ENCODE measurements at regions of chr6 and their contacts with region 1.

Region 1: GRCh38 chr6:144284783-144285547 is at the start of gene UTRN:
- DNase-seq: peak; percentile 64
- H3K4me3 Mint-ChIP-seq: peak within 1 kb of the TSS; percentile 86
- H3K27ac Mint-ChIP-seq: no peak within 1 kb of the TSS
- H3K4me1 Mint-ChIP-seq: peaks cover 12% of the 10 kb centered on the region
- H3K27me3 Mint-ChIP-seq: peaks cover 21% of the 10 kb centered on the region
- total RNA-seq, gene UTRN: 35.3 to 39.9 TPM

Region 2: DNA sequence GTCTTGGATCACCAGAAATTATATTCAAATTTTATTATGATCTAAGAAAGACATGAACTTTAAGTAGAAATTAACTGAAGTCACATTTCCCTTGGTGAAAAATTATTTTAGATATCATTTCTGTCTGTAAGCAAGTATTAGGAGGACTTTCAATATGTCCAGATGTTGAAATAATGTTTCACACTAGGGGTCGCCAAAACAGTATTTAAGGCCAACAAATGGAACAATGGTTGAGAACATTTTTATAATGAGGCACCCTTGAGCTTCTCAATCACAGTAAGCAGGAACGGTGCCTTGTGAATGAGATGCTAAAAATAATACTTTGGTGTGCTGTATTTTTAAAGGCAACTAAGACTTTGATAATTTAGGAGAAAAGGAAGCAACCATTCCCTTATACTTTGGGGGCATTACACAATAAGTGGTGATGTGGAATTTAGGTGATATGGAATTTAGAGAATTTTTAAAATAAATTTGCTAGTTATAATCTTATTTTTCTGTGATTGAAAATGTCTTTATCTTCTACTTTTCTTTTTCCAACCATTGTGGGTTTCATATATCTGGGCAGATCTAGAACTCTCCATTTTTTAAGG is 180.0 kb before region 1 on chr6:
- CTCF ChIA-PET with region 1: interaction called, 3 read pairs
- intact Hi-C with region 1: loop called (anchors 2 kb)
- DNase-seq: peak; percentile 48
- H3K4me3 Mint-ChIP-seq: no peak overlapping the region
- H3K27ac Mint-ChIP-seq: no peak overlapping the region
- H3K4me1 Mint-ChIP-seq: peaks cover 11% of the 10 kb centered on the region
- H3K27me3 Mint-ChIP-seq: no peaks in the 10 kb centered on the region

Region 3: DNA sequence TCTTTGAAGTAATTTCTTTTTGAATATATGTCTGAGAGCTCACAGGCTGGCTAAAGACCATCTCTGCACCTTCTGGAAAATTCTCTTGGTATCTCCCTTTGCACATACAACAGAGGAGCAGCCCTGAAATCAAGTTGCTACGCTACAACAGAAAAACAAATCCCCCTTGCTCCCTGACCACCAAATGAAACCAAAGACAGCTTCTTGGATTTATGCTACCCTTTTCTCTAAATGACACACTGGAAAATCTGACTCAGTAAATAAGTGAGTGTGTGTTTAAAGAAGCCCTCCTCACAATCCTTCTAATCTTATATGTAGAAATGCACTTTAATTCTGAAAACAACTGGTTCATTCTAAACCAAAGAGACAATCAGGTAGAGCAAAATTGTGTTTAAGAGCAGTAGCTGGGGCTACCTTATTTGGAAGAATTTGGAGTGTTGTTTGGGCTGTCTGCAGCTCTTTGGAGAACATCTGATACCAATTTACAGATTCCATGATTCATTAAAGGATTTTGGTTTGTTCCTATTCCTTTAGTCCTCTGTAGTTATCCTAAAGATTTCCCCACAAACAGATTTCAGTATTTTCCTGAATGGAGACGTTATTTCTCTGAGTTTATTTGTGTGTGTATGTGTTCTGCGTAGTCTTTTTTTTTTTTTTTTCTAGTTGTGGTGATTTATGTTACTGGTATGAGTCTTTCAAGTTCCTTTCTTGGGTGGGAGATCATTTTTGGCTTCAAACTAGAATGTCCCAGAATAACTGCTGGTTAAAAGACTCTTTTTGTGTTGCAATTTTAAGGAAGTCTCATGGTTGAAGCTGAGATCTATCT is 36.3 kb before region 1 on chr6:
- CTCF ChIA-PET with region 1: no interaction called
- intact Hi-C with region 1: loop called (anchors 1 kb)
- DNase-seq: peak; percentile 9
- H3K4me3 Mint-ChIP-seq: no peak overlapping the region
- H3K27ac Mint-ChIP-seq: peak overlapping the region; percentile 32
- H3K4me1 Mint-ChIP-seq: peaks cover 16% of the 10 kb centered on the region
- H3K27me3 Mint-ChIP-seq: peaks cover 4% of the 10 kb centered on the region

Region 4: DNA sequence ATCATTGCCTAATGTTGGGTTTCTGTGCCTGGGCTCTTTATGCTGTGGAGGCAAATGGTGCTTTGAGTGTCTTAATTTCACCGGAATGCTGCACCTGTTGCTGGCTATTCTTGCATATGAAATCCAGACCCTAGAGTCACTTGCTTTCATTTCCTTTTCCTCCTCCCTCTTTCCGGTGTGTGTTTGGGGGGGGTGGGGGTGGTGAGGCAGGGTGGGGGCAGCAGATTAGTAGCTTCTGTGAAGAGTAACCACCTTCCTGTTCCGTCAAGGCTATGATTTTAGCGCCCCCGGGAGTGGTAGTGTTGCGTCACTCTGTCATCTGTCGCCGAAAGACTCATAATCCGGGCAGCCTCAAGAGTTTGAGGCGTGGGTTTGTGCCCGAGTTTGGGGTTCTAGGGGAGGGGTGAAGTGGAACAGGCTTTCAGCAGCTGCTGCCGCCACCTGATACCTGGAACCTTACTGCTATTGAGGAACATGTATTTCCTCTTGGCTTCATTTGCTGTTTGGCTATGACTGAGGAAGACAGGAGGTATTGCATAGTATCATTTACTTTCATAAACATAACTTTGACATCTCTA is 49.3 kb after region 1 on chr6:
- CTCF ChIA-PET with region 1: no interaction called
- intact Hi-C with region 1: loop called (anchors 1 kb)
- DNase-seq: peak; percentile 83
- H3K4me3 Mint-ChIP-seq: peak overlapping the region; percentile 59
- H3K27ac Mint-ChIP-seq: peak overlapping the region; percentile 50
- H3K4me1 Mint-ChIP-seq: peaks cover 45% of the 10 kb centered on the region
- H3K27me3 Mint-ChIP-seq: no peaks in the 10 kb centered on the region

Region 5: GRCh38 chr6:144482142-144482541 is 197.2 kb after region 1 on chr6:
- CTCF ChIA-PET with region 1: interaction called, 8 read pairs
- intact Hi-C with region 1: loop called (anchors 1 kb)
- DNase-seq: peak; percentile 88
- H3K4me3 Mint-ChIP-seq: no peak overlapping the region
- H3K27ac Mint-ChIP-seq: no peak overlapping the region
- H3K4me1 Mint-ChIP-seq: peaks cover 3% of the 10 kb centered on the region
- H3K27me3 Mint-ChIP-seq: no peaks in the 10 kb centered on the region